Heart right ventricle (tissue), 16 donors: ENCODE measurements at regions of chr3 and their contacts with region 1.

Region 1: DNA sequence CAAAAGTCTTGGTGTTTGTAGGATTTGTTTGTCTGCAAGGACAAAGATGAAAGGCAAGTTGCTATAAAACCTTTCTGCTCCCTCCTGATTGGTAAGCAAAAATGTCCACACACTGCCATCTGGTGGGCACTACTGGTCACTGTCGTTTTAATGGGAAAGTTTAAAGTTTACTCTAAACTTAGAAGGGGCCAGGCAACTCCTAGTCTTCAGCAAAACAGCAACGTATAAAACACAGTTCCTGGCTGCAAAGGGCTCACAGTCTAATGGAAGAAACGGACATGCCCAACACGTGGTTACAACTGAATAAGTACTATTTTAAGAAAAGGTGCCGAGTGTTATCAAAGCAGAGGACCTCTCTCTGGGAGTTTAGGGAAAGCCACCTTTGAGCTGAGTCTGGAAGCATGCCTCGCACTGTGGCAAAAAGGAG is 23.7 kb upstream of the TPRG1 start:
- DNase-seq: peak; percentile 23 to 68
- ATAC-seq: peak; percentile 56 to 79 (median 70)
- H3K4me3 ChIP-seq: no peak overlapping the region
- H3K27ac ChIP-seq: peak overlapping the region in 2 of 10 donors; percentile 11 to 46
- H3K4me1 ChIP-seq: peaks cover 0 to 32% (median 7%) of the 10 kb centered on the region in 9 donors
- H3K27me3 ChIP-seq: no peaks in the 10 kb centered on the region
- CTCF ChIP-seq: peak; percentile 68 to 85 (median 78)

Region 2: GRCh38 chr3:188962253-188963247 is 185.5 kb before region 1 on chr3:
- intact Hi-C with region 1: loop called in 9 of 10 experiments (anchors 2 to 10 kb)
- DNase-seq: no peak
- ATAC-seq: peak in 5 of 8 donors; percentile 30 to 62 (median 43)
- H3K4me3 ChIP-seq: no peak overlapping the region
- H3K27ac ChIP-seq: peak overlapping the region in 2 of 10 donors; percentile 15 to 33
- H3K4me1 ChIP-seq: peaks cover 0 to 19% (median 8%) of the 10 kb centered on the region in 9 donors
- H3K27me3 ChIP-seq: no peaks in the 10 kb centered on the region
- CTCF ChIP-seq: no peak

Region 3: GRCh38 chr3:189041482-189042090 is 106.5 kb before region 1 on chr3:
- intact Hi-C with region 1: loop called in 1 of 10 experiments (anchors 10 kb)
- DNase-seq: peak in 1 of 2 donors; percentile 8
- ATAC-seq: peak in 4 of 8 donors; percentile 23 to 50 (median 37)
- H3K4me3 ChIP-seq: no peak overlapping the region
- H3K27ac ChIP-seq: no peak overlapping the region
- H3K4me1 ChIP-seq: peaks cover 0 to 6% (median 0%) of the 10 kb centered on the region in 9 donors
- H3K27me3 ChIP-seq: no peaks in the 10 kb centered on the region
- CTCF ChIP-seq: peak in 6 of 9 donors; percentile 35 to 55 (median 44)

Region 4: GRCh38 chr3:189236352-189236751 is 88.3 kb after region 1 on chr3:
- intact Hi-C with region 1: no loop called
- DNase-seq: no peak
- ATAC-seq: no peak
- H3K4me3 ChIP-seq: no peak overlapping the region
- H3K27ac ChIP-seq: no peak overlapping the region
- H3K4me1 ChIP-seq: peaks cover 0 to 7% (median 0%) of the 10 kb centered on the region in 9 donors
- H3K27me3 ChIP-seq: no peaks in the 10 kb centered on the region
- CTCF ChIP-seq: no peak